IMR-90 (cell line): ENCODE measurements at regions of chr3 and their contacts with region 1.

Region 1: GRCh38 chr3:123884203-123884831 is at the start of gene MYLK:
- DNase-seq: peak; percentile 95
- ATAC-seq: peak; percentile 94
- H3K4me3 ChIP-seq: peak within 1 kb of the TSS; percentile 63
- H3K27ac ChIP-seq: peak within 1 kb of the TSS; percentile 50
- H3K4me1 ChIP-seq: peaks cover 15% of the 10 kb centered on the region
- H3K27me3 ChIP-seq: no peaks in the 10 kb centered on the region
- CTCF ChIP-seq: no peak
- POLR2A ChIP-seq: no peak
- RAD21 ChIP-seq: no peak
- total RNA-seq, gene MYLK: 484 and 521 TPM in 2 replicates

Region 2: GRCh38 chr3:123725652-123726400 is 158.5 kb before region 1 on chr3:
- CTCF ChIA-PET with region 1: no interaction called
- POLR2A ChIA-PET with region 1: no interaction called
- dilution Hi-C with region 1: no loop called
- in situ Hi-C with region 1: no loop called
- intact Hi-C with region 1: loop called (anchors 5 kb)
- DNase-seq: no peak
- ATAC-seq: no peak
- H3K4me3 ChIP-seq: no peak overlapping the region
- H3K27ac ChIP-seq: peak overlapping the region; percentile 17; the same call in 1 of the 2 replicates
- H3K4me1 ChIP-seq: peaks cover 14% of the 10 kb centered on the region
- H3K27me3 ChIP-seq: no peaks in the 10 kb centered on the region
- CTCF ChIP-seq: 0 out of 2 replicates have a peak, but pooled peaks have one; percentile 12
- POLR2A ChIP-seq: no peak
- RAD21 ChIP-seq: no peak

Region 3: DNA sequence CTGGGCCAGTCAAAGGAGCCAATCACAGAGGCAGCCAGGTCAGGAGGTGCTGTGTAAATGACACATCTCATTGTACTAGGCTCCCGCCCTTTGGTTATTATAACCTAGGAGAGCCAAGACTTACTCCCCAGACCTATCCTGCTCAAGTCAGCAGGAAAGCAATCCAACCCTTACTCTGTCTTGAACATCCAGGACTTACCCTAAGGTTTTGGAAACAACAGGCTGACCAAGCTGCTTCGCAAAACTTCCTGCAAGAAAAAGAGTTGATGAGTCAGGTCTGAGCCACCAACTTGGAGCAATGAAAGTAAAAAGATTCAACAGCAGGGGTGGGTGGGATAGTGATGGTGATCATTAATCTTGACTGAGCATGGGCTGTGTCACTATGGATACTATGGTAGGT is 144.6 kb before region 1 on chr3:
- CTCF ChIA-PET with region 1: interaction called, 4 read pairs
- POLR2A ChIA-PET with region 1: interaction called, 6 read pairs
- dilution Hi-C with region 1: no loop called
- in situ Hi-C with region 1: no loop called
- intact Hi-C with region 1: loop called (anchors 5 kb)
- DNase-seq: peak; percentile 93
- ATAC-seq: peak; percentile 36
- H3K4me3 ChIP-seq: no peak overlapping the region
- H3K27ac ChIP-seq: peak overlapping the region; percentile 95
- H3K4me1 ChIP-seq: peaks cover 33% of the 10 kb centered on the region
- H3K27me3 ChIP-seq: no peaks in the 10 kb centered on the region
- CTCF ChIP-seq: no peak
- POLR2A ChIP-seq: no peak
- RAD21 ChIP-seq: no peak

Region 4: DNA sequence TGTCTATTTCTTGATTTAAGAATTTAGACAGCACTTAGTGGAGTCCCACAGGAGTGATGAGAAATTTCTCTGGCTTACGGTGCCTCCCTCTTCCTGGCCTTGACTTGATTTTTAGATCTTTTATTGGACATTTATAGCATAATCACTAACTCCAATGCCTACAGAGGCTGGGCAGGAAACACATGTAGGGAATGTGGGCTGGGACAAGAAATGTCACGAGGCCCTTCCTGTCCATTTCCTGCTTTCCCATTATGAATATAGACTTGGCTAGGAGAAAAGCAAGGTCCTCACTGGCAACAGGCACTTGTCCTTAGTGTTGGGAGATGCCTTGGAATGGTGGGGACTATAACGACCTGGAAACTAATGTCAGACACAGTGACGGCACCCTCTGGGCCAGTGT is 100.5 kb before region 1 on chr3:
- CTCF ChIA-PET with region 1: no interaction called
- POLR2A ChIA-PET with region 1: interaction called, 4 read pairs
- dilution Hi-C with region 1: no loop called
- in situ Hi-C with region 1: no loop called
- intact Hi-C with region 1: loop called (anchors 5 kb)
- DNase-seq: no peak
- ATAC-seq: peak; percentile 1; the same call in 1 of the 2 replicates
- H3K4me3 ChIP-seq: no peak overlapping the region
- H3K27ac ChIP-seq: peak overlapping the region; percentile 93
- H3K4me1 ChIP-seq: peaks cover 38% of the 10 kb centered on the region
- H3K27me3 ChIP-seq: no peaks in the 10 kb centered on the region
- CTCF ChIP-seq: no peak
- POLR2A ChIP-seq: no peak
- RAD21 ChIP-seq: no peak